PC-9 (cell line): ENCODE measurements at regions of chr2 and their contacts with region 1.

Region 1: GRCh38 chr2:84022810-84023431 is 436.2 kb downstream of the SUCLG1 start:
- DNase-seq: peak; percentile 3 to 54
- H3K4me3 ChIP-seq: no peak overlapping the region
- H3K27ac ChIP-seq: no peak overlapping the region
- H3K4me1 ChIP-seq: no peaks in the 10 kb centered on the region
- H3K27me3 ChIP-seq: no peaks in the 10 kb centered on the region
- CTCF ChIP-seq: peak; percentile 76

Region 2: DNA sequence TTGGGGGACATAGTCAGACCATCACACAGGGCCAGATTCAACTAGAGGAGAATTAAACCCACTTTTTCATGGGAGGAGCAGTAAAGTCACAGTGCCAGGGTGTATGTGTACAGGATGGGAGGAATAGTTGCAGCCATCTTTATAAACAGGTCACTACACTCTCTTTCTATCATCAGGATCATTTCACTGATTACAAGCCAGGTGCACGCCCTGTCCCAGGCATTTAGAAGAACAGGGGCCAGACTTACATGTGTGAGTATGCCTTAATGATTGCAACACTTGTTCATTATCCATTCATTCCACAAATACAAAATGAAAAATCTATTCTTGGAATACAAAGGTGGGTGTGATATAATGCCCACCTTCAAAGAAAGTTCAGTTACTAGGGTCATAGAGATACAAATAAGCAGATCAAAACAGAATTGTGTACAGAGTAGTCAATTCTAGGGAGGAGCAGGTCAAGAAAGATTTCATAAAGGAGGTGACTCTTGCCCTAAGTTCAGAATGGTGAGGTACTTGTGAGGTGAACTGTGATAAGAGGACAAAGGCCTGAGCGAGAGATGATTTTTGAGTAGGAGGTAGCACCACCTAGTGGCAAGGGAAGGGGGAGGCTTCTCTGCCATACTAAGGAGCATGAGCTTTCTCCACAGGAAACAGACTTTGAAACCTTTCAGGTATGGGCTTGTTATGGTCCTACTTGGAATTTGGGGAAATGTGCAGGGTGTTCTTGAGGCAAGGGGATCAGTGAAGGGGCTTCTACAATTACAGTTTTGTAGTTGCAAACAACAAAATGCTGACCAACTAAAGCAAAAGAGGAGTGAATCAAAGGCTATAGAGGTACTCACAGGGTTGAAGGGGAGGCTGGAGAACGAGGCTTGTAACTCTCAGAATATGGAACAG is 279.8 kb after region 1 on chr2:
- CTCF ChIA-PET with region 1: no interaction called
- POLR2A ChIA-PET with region 1: no interaction called
- intact Hi-C with region 1: loop called (anchors 2 kb)
- DNase-seq: peak in 1 of 2 experiments; percentile 24
- H3K4me3 ChIP-seq: no peak overlapping the region
- H3K27ac ChIP-seq: no peak overlapping the region
- H3K4me1 ChIP-seq: no peaks in the 10 kb centered on the region
- H3K27me3 ChIP-seq: peaks cover 29% of the 10 kb centered on the region
- CTCF ChIP-seq: peak; percentile 76

Region 3: GRCh38 chr2:84424152-84424551 is 401.2 kb after region 1 on chr2:
- CTCF ChIA-PET with region 1: no interaction called
- POLR2A ChIA-PET with region 1: no interaction called
- intact Hi-C with region 1: loop called (anchors 10 kb)
- DNase-seq: no peak
- H3K4me3 ChIP-seq: no peak overlapping the region
- H3K27ac ChIP-seq: no peak overlapping the region
- H3K4me1 ChIP-seq: peaks cover 16% of the 10 kb centered on the region
- H3K27me3 ChIP-seq: no peaks in the 10 kb centered on the region
- CTCF ChIP-seq: peak; percentile 69